ENCODE measurements at regions of chr3 and their contacts with region 1.

Region 1: DNA sequence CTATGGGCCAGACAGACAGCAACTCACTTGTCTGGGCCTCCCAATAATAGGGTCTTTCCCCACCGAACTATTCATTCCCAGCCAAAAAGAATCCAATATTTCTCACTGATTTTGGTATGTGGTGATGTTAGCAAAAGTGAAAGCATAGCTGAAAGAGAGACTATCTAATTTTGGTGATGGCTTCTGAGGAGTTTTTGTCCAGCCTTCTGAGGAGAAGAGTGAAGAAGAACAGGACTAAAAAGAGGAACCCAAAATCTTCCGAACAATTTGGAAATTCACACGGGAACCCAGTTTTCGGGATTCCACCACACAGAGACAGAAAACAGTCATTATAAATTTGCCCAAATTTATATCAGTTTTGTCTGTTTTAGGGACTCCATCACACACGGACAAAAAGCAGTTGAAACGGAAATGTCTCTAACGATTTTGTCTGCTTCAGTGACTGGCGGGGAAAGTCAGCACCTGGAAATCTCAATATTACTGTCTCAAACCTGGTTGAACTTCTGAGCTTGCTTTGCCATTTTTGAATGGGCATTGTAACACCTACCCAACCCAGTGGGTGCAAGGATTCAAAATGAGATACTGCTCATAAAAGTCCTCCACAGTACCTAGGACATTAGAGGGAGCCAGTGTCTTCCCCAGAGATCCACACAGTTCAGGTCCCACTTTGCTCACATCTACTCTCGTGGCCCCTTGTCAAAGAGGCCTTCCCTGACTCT is 9.1 kb downstream of the CD80 start:
- DNase-seq: no peak
- CTCF ChIP-seq: no peak

Region 2: GRCh38 chr3:118884748-118885206 is 665.6 kb before region 1 on chr3:
- CTCF ChIA-PET with region 1: no interaction called
- POLR2A ChIA-PET with region 1: no interaction called
- DNase-seq: peak; percentile 32
- CTCF ChIP-seq: peak; percentile 88

Region 3: DNA sequence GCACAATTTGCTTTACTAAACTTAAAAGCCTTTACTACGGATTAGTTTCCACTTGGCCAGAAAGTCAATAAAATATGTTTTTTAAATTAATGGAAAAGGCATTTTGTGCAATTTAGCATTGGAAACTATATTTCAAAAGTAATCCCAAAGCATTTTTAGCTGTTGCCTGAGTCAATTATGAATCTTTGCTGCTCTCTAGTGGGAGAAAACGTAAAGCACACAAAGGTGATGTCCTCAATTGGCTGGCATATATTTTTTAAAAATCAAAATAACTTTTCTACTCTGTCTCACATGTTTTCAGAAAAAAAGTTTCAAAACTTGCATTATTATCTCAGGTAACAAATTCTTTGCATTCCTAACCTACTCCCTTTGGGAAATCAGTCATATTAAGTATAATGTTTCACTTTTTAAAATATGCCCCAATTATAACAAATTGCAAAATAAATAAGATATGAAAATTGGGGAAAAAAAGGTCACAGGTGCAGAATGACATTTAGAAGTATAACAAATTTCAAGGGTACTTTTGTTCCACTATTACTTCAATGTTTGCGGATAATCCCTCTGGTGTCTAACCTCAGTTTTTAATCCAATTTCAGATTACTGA is 451.6 kb before region 1 on chr3:
- CTCF ChIA-PET with region 1: no interaction called
- POLR2A ChIA-PET with region 1: interaction called, 10 read pairs
- DNase-seq: peak; percentile 33
- CTCF ChIP-seq: peak; percentile 62

Measured in GM10248 (cell line).